ENCODE measurements at regions of chr4 and their contacts with region 1.

Region 1: GRCh38 chr4:187606581-187606980 is 389.0 kb upstream of the ZFP42 start:
- DNase-seq: peak in 1 of 2 experiments; percentile 56
- H3K4me3 ChIP-seq: no peak overlapping the region
- H3K27ac ChIP-seq: no peak overlapping the region
- H3K4me1 ChIP-seq: no peaks in the 10 kb centered on the region; a peak in 1 of 7 replicates
- H3K27me3 ChIP-seq: no peaks in the 10 kb centered on the region
- CTCF ChIP-seq: peak; percentile 43 to 88 (median 76)
- EP300 ChIP-seq: no peak
- POLR2A ChIP-seq: no peak
- RAD21 ChIP-seq: peak; percentile 92 to 93

Region 2: DNA sequence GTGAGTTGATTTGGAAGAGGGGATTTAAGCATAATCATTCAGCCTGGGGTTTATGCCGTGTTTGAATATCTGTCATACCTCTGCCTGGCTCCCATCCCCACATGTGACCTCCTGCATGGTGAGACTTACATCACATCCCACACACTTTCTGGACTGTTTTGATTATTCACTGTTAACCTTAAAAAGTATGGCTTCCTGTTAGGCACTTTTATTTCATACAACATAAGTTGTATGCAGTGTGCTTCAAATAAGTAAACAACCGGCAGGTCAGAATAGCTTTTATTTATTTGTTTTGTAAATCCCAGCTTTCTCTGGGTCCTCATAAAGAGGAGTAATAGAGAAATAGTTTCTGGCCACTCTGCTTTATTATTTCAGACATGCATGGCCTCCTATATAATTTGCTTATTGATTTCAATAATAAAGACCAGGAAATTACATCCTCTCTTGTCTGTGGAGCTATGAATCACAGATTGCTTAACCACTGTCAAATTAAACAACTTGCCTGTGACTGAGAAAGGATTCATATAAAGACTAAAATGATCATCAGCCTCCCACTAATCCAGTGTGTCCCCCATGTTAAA is 12.2 kb after region 1 on chr4:
- CTCF ChIA-PET with region 1: interaction called, 20 read pairs
- POLR2A ChIA-PET with region 1: no interaction called
- DNase-seq: no peak
- H3K4me3 ChIP-seq: no peak overlapping the region
- H3K27ac ChIP-seq: no peak overlapping the region
- H3K4me1 ChIP-seq: no peaks in the 10 kb centered on the region
- H3K27me3 ChIP-seq: no peaks in the 10 kb centered on the region
- CTCF ChIP-seq: no peak
- EP300 ChIP-seq: no peak
- POLR2A ChIP-seq: no peak
- RAD21 ChIP-seq: no peak

Measured in H1 (cell line).